ENCODE measurements at regions of chr6 and their contacts with region 1.

Region 1: DNA sequence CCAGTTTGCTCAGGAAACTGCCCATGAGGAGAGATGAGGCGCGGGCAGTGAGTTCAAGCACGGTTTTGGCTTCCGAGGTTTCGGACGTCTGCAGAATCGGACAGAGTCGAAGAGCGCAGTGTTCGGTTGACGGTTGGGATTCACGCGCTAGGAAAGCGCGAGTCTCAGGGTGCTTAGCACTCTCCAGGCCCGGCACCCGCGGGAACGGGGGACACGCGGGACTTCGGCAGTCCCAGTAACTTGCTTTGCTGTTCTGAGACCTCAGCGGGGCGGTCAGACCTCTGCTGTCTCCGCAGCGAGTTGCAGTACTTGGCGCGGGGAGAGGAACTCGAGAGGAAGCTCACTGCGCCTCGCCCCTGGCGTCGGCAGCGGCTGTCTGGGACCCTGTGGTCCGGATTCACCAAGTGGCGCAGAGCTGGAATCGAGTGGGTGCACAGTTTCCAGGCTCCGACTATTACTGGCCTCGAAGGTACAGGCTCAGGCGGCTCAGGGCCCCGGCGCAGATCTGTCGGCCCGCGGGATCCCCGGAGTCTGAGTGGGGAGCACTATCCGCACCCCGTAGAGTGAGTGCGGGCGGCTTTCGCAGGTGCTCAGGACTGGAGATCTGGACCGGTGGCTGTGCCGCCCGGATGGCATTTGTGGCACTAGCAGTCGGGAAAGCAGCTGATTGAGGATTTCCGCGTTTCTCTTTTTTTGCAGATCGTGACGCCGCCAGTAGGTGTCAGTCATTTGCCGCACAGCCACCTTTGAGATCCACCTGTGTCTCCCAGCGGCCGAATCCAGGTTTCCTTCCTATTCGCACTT is at the start of gene POM121L2:
- DNase-seq: peak; percentile 23 to 81 (median 52)
- ATAC-seq: peak; percentile 66
- H3K4me3 ChIP-seq: peak within 1 kb of the TSS; percentile 71
- H3K4me3 Mint-ChIP-seq: peak within 1 kb of the TSS; percentile 83
- H3K27ac ChIP-seq: no peak within 1 kb of the TSS
- H3K27ac Mint-ChIP-seq: no peak within 1 kb of the TSS
- H3K4me1 ChIP-seq: peaks cover 12% of the 10 kb centered on the region
- H3K4me1 Mint-ChIP-seq: peaks cover 6% of the 10 kb centered on the region
- H3K27me3 ChIP-seq: peaks cover 35 to 68% of the 10 kb centered on the region in 2 experiments
- H3K27me3 Mint-ChIP-seq: peaks cover 93% of the 10 kb centered on the region
- CTCF ChIP-seq: peak; percentile 82
- total RNA-seq, gene POM121L2: not detected

Region 2: GRCh38 chr6:27157459-27158315 is 154.7 kb before region 1 on chr6:
- CTCF ChIA-PET with region 1: no interaction called
- POLR2A ChIA-PET with region 1: no interaction called
- intact Hi-C with region 1: loop called in 1 of 2 experiments (anchors 5 kb)
- DNase-seq: peak; percentile 73 to 93 (median 85)
- ATAC-seq: peak; percentile 88
- H3K4me3 ChIP-seq: peak overlapping the region; percentile 59
- H3K4me3 Mint-ChIP-seq: peak overlapping the region; percentile 90
- H3K27ac ChIP-seq: peak overlapping the region in 1 of 2 donors; percentile 32
- H3K27ac Mint-ChIP-seq: peak overlapping the region; percentile 96
- H3K4me1 ChIP-seq: peaks cover 22% of the 10 kb centered on the region
- H3K4me1 Mint-ChIP-seq: peaks cover 44% of the 10 kb centered on the region
- H3K27me3 ChIP-seq: no peaks in the 10 kb centered on the region
- H3K27me3 Mint-ChIP-seq: peaks cover 7% of the 10 kb centered on the region
- CTCF ChIP-seq: peak; percentile 78

Region 3: GRCh38 chr6:27188885-27189418 is 123.4 kb before region 1 on chr6:
- CTCF ChIA-PET with region 1: no interaction called
- POLR2A ChIA-PET with region 1: no interaction called
- intact Hi-C with region 1: loop called in 1 of 2 experiments (anchors 5 kb)
- DNase-seq: peak in 9 of 14 experiments; percentile 28 to 86 (median 39)
- ATAC-seq: peak; percentile 85
- H3K4me3 ChIP-seq: peak overlapping the region; percentile 66
- H3K4me3 Mint-ChIP-seq: peak overlapping the region; percentile 88
- H3K27ac ChIP-seq: no peak overlapping the region
- H3K27ac Mint-ChIP-seq: peak overlapping the region; percentile 3
- H3K4me1 ChIP-seq: peaks cover 18% of the 10 kb centered on the region
- H3K4me1 Mint-ChIP-seq: peaks cover 13% of the 10 kb centered on the region
- H3K27me3 ChIP-seq: no peaks in the 10 kb centered on the region
- H3K27me3 Mint-ChIP-seq: peaks cover 9% of the 10 kb centered on the region
- CTCF ChIP-seq: peak; percentile 85

Region 4: DNA sequence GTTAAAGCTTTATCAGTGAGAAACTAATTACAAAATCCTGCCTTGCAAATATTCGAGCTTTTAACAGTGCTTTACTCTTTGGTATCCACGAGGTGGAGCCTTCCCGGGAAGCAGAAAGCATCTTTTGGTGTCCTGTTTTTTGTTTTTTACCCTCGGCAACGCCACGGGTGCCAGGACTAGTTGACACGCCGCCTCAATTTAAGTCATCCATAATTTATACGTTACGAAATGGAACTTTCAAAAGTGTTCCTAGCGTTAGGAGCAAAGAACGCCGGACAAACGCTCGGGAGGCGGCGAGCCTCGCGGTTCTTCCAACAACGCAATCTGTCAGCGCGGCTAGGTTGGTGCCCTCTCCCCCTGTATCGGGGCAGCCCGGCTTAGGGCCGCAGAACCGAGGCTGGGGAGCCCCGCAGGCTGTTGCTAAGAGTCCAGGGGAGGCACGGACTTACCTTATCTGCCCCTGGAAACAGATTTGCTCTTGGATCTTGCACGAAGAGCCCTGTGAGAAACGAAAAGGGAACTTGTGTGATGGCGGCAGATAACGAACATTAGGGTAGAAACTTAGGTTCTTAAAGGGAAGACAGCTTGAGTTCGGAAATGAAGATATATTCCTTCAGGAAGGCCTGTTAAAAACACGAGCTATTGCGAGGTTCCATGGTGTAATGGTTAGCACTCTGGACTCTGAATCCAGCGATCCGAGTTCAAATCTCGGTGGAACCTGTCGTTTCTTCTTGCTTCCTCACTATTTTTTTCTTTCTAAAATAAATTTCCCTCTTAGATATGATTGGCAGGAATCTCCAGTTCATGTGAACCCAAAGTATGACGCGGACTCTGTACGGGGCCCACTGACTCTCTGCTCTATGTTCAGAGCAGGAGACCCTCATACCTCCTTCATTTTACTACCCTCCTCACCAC is 206.8 kb after region 1 on chr6:
- CTCF ChIA-PET with region 1: interaction called, 10 read pairs
- POLR2A ChIA-PET with region 1: interaction called, 3 read pairs
- intact Hi-C with region 1: loop called in 1 of 2 experiments (anchors 5 kb)
- DNase-seq: peak; percentile 33 to 89 (median 54)
- ATAC-seq: peak; percentile 84
- H3K4me3 ChIP-seq: peak overlapping the region; percentile 92
- H3K4me3 Mint-ChIP-seq: peak overlapping the region; percentile 91
- H3K27ac ChIP-seq: peak overlapping the region; percentile 17 to 76
- H3K27ac Mint-ChIP-seq: peak overlapping the region; percentile 89
- H3K4me1 ChIP-seq: peaks cover 12% of the 10 kb centered on the region
- H3K4me1 Mint-ChIP-seq: peaks cover 31% of the 10 kb centered on the region
- H3K27me3 ChIP-seq: peaks cover 7% of the 10 kb centered on the region in 2 experiments
- H3K27me3 Mint-ChIP-seq: peaks cover 28% of the 10 kb centered on the region
- CTCF ChIP-seq: peak; percentile 78

Region 5: GRCh38 chr6:27546522-27546921 is 234.2 kb after region 1 on chr6:
- CTCF ChIA-PET with region 1: no interaction called
- POLR2A ChIA-PET with region 1: no interaction called
- intact Hi-C with region 1: no loop called
- DNase-seq: no peak
- ATAC-seq: no peak
- H3K4me3 ChIP-seq: no peak overlapping the region
- H3K4me3 Mint-ChIP-seq: no peak overlapping the region
- H3K27ac ChIP-seq: no peak overlapping the region
- H3K27ac Mint-ChIP-seq: no peak overlapping the region
- H3K4me1 ChIP-seq: peaks cover 10% of the 10 kb centered on the region
- H3K4me1 Mint-ChIP-seq: peaks cover 12% of the 10 kb centered on the region
- H3K27me3 ChIP-seq: peaks cover 80 to 94% of the 10 kb centered on the region in 2 experiments
- H3K27me3 Mint-ChIP-seq: peaks cover 97% of the 10 kb centered on the region
- CTCF ChIP-seq: no peak

Region 6: GRCh38 chr6:27608916-27609883 is 296.9 kb after region 1 on chr6:
- CTCF ChIA-PET with region 1: no interaction called
- POLR2A ChIA-PET with region 1: no interaction called
- intact Hi-C with region 1: loop called in 1 of 2 experiments (anchors 5 kb)
- DNase-seq: peak in 3 of 14 experiments; percentile 48 to 58 (median 56)
- ATAC-seq: no peak
- H3K4me3 ChIP-seq: no peak overlapping the region
- H3K4me3 Mint-ChIP-seq: no peak overlapping the region
- H3K27ac ChIP-seq: no peak overlapping the region
- H3K27ac Mint-ChIP-seq: no peak overlapping the region
- H3K4me1 ChIP-seq: peaks cover 10% of the 10 kb centered on the region
- H3K4me1 Mint-ChIP-seq: peaks cover 18% of the 10 kb centered on the region
- H3K27me3 ChIP-seq: peaks cover 25 to 45% of the 10 kb centered on the region in 2 experiments
- H3K27me3 Mint-ChIP-seq: peaks cover 74% of the 10 kb centered on the region
- CTCF ChIP-seq: peak; percentile 59

Region 7: DNA sequence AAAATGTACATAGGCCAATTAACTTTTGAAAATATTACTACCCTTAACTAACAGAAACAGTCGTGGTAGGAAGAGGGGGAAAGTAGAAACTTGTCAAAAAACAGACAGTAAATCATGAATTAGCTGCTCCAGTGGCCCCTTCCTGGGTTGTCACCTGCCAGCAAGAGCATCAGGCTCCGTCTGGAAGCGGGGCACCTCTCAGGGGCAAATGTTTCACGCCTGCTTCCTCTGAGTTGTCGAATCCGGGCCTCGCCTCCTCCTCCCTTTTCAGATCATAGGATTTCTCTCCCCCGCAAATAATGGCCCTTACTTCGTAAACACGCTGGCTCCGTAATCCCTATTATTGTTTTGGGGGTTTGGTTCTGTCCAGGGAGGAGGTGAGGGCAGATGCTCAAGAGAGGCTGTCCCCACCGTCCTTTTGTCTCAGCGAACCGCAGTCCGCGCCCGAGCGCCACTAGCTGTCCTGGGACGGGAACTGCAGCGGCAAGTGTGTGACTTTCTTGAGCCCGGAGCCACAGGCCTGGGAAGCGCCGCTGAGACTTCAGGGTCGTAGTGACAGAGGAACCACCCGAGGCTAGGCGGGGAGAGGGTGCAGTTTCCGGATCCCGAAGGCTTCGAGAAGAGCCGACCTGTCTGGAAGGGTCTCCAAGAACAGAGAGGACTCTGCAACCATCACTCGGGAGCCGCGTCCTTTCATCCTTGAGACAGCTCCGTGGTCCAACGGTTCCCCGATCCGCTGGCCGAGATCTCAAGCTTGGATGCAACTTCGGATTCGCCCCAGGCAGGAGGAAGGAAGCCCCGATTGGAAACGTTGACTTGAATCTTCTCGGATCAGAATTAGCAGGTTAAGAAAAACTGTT is 375.0 kb after region 1 on chr6:
- CTCF ChIA-PET with region 1: no interaction called
- POLR2A ChIA-PET with region 1: interaction called, 5 read pairs
- intact Hi-C with region 1: loop called in 1 of 2 experiments (anchors 5 kb)
- DNase-seq: peak; percentile 53 to 87 (median 68)
- ATAC-seq: peak; percentile 74
- H3K4me3 ChIP-seq: peak overlapping the region; percentile 88
- H3K4me3 Mint-ChIP-seq: peak overlapping the region; percentile 95
- H3K27ac ChIP-seq: peak overlapping the region in 1 of 2 donors; percentile 37
- H3K27ac Mint-ChIP-seq: peak overlapping the region; percentile 97
- H3K4me1 ChIP-seq: peaks cover 14% of the 10 kb centered on the region
- H3K4me1 Mint-ChIP-seq: peaks cover 38% of the 10 kb centered on the region
- H3K27me3 ChIP-seq: peaks cover 5 to 9% of the 10 kb centered on the region in 2 experiments
- H3K27me3 Mint-ChIP-seq: peaks cover 40% of the 10 kb centered on the region
- CTCF ChIP-seq: peak; percentile 66

Region 8: GRCh38 chr6:27795697-27796494 is 483.5 kb after region 1 on chr6:
- CTCF ChIA-PET with region 1: interaction called, 4 read pairs
- POLR2A ChIA-PET with region 1: no interaction called
- intact Hi-C with region 1: loop called in 1 of 2 experiments (anchors 2 kb)
- DNase-seq: peak in 9 of 14 experiments; percentile 11 to 88 (median 36)
- ATAC-seq: peak; percentile 72
- H3K4me3 ChIP-seq: no peak overlapping the region
- H3K4me3 Mint-ChIP-seq: peak overlapping the region; percentile 47
- H3K27ac ChIP-seq: no peak overlapping the region
- H3K27ac Mint-ChIP-seq: peak overlapping the region; percentile 80
- H3K4me1 ChIP-seq: peaks cover 20% of the 10 kb centered on the region
- H3K4me1 Mint-ChIP-seq: peaks cover 31% of the 10 kb centered on the region
- H3K27me3 ChIP-seq: peaks cover 5 to 9% of the 10 kb centered on the region in 2 experiments
- H3K27me3 Mint-ChIP-seq: peaks cover 18% of the 10 kb centered on the region
- CTCF ChIP-seq: peak; percentile 80

Measured in CD4-positive, alpha-beta T cell (primary cell).